Stomach (tissue), 19 donors: ENCODE measurements at regions of chr20 and their contacts with region 1.

Region 1: DNA sequence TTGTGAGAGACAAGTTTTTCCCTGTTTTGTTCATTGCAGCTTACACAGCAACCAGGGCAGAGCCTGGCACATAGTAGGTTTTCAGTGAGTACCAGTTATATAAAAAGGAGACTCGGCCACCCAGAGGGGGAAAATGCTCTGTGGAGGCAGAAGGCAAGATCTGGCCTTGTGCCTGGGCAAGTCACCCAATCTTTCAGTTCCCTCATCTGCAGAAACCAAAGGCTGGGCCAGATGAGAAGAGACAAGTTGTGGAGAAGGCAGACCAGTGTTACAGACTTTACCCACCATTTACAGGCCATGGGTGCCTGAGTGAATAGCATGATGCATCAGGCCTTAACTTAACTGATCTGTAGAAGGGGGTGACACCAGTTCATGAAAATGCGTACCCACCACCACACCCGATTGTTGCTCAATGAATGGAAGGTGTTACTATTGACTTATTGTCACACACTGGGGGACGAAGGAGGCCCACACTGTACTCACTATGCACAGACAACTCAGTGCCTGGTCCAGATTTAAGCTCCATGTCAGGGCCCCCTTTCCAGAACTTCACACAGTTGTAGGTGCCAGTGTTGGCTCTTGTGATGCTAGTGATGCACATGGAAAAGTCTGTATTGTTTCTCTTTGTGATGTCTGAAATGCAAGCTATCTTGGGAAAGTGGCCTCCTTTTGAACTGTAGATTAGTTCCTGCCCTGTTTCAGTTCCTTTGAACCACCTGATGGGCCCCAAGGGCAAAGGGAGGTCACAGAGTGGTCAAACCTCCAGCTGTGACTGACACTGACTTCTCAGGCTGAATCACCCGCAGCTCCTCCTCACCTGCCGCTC is 64.3 kb upstream of the SIRPG start:
- DNase-seq: no peak
- H3K4me3 ChIP-seq: no peak overlapping the region
- H3K27ac ChIP-seq: no peak overlapping the region
- H3K4me1 ChIP-seq: no peaks in the 10 kb centered on the region
- H3K27me3 ChIP-seq: no peaks in the 10 kb centered on the region
- CTCF ChIP-seq: no peak
- EP300 ChIP-seq: no peak
- POLR2A ChIP-seq: no peak

Region 2: GRCh38 chr20:1341561-1342265 is 380.2 kb before region 1 on chr20:
- intact Hi-C with region 1: no loop called
- DNase-seq: no peak
- H3K4me3 ChIP-seq: no peak overlapping the region
- H3K27ac ChIP-seq: no peak overlapping the region
- H3K4me1 ChIP-seq: peaks cover 8 to 18% (median 13%) of the 10 kb centered on the region in 4 donors
- H3K27me3 ChIP-seq: no peaks in the 10 kb centered on the region
- CTCF ChIP-seq: no peak
- EP300 ChIP-seq: no peak
- POLR2A ChIP-seq: no peak

Region 3: DNA sequence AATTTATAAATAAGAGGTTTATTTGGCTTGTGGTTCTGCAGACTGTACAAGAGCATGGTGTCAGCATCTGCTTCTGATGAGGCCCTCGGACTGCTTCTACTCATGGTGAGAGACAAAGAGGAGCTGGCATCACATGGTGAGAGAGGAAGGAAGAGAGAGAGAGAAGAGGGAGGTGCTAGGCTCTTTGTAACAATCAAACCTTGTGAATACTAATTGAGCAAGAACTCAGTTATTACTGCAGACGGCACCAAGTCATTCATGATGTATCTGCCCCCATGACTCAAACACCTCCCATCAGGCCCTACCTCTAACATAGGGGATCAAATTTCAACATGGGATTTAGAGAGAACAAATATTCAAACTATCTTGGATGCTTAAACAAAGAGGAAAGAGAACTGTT is 58.0 kb before region 1 on chr20:
- intact Hi-C with region 1: loop called (anchors 10 kb)
- DNase-seq: no peak
- H3K4me3 ChIP-seq: no peak overlapping the region
- H3K27ac ChIP-seq: no peak overlapping the region
- H3K4me1 ChIP-seq: no peaks in the 10 kb centered on the region
- H3K27me3 ChIP-seq: no peaks in the 10 kb centered on the region
- CTCF ChIP-seq: no peak
- EP300 ChIP-seq: no peak
- POLR2A ChIP-seq: no peak

Region 4: DNA sequence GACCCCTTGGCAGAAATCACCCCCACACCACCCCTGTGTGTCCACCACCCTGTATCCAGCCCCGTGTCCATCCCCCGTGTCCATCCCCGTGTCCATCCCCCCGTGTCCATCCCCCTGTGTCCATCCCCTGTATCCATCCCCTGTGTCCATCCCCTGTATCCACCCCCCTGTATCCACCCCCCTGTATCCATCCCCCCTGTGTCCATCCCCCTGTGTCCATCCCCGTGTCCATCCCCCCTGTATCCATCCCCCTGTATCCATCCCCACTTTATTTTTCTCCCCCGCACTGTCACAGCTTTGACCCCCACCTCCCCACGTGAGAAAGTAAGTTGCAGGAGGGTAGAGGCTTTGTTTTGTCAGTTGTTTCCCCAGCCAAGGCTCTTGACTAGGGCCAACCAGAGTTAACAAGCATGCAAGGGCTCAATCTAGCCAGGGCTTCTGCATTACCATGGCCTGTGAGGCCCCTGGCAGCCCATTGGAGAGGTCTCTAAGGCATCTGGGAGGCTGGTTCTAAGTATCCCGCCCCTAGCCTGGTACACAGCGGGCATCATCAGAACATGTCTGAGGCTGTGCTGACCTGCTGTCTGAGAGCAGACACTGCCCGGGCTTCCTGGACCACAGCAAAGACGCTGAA is 155.2 kb after region 1 on chr20:
- intact Hi-C with region 1: no loop called
- DNase-seq: peak in 1 of 2 donors; percentile 75
- H3K4me3 ChIP-seq: no peak overlapping the region
- H3K27ac ChIP-seq: no peak overlapping the region
- H3K4me1 ChIP-seq: peaks cover 5 to 44% (median 14%) of the 10 kb centered on the region in 4 donors
- H3K27me3 ChIP-seq: peaks cover 0 to 28% (median 0%) of the 10 kb centered on the region in 3 donors
- CTCF ChIP-seq: no peak
- EP300 ChIP-seq: no peak
- POLR2A ChIP-seq: no peak

Region 5: GRCh38 chr20:1987826-1988225 is 265.9 kb after region 1 on chr20:
- intact Hi-C with region 1: no loop called
- DNase-seq: no peak
- H3K4me3 ChIP-seq: no peak overlapping the region
- H3K27ac ChIP-seq: no peak overlapping the region
- H3K4me1 ChIP-seq: no peaks in the 10 kb centered on the region
- H3K27me3 ChIP-seq: peaks cover 0 to 72% (median 18%) of the 10 kb centered on the region in 3 donors
- CTCF ChIP-seq: no peak
- EP300 ChIP-seq: no peak
- POLR2A ChIP-seq: no peak